GM12878 (cell line): ENCODE measurements at regions of chrX and their contacts with region 1.

Region 1: DNA sequence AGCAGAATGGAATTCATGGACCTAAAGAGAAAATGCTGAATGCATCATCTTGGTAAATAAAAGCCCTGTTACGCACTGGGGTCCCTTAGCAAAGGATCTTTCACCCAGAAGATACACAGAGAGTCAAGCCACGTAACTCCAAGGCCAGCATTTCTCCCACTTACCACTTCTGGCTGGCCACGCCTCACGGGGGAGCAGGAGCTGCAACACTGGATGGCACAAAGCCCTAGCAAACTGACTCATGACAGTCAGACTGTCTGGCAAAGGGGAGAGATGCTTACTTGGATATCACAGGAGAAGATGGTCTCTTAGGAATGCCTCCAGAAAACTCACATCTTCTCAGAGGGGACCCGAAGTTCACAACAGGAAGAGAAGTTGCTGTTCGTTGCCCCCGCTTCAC is 51.4 kb upstream of the BCLAF3 start:
- DNase-seq: no peak
- ATAC-seq: no peak
- H3K4me3 ChIP-seq: no peak overlapping the region
- H3K27ac ChIP-seq: no peak overlapping the region
- H3K4me1 ChIP-seq: no peaks in the 10 kb centered on the region
- H3K27me3 ChIP-seq: no peaks in the 10 kb centered on the region
- CTCF ChIP-seq: no peak
- EP300 ChIP-seq: no peak
- POLR2A ChIP-seq: no peak
- RAD21 ChIP-seq: no peak

Region 2: DNA sequence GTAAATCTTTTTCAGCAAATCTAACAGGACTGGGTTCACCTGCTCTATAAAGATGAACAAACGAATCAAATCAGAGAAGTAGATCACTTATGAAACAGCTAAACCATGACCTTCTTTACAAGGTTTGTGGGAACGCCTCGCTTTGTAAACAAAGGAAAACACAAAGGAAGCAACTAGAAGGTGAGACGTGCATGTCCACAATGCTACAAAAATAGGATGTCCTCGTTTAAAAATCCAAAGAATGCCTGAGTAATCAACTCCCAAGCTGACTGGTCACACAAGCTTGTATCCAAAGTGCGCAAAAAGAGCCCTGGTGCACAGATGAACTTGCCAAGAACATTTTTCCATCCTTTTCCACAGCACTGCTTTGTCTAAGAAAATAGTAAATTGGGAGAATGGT is 148.5 kb before region 1 on chrX:
- CTCF ChIA-PET with region 1: no interaction called
- POLR2A ChIA-PET with region 1: no interaction called
- RAD21 ChIA-PET with region 1: no interaction called
- SMC1A ChIA-PET with region 1: no interaction called
- in situ Hi-C with region 1: no loop called
- intact Hi-C with region 1: no loop called
- DNase-seq: no peak
- ATAC-seq: no peak
- H3K4me3 ChIP-seq: no peak overlapping the region
- H3K27ac ChIP-seq: no peak overlapping the region
- H3K4me1 ChIP-seq: peaks cover 9% of the 10 kb centered on the region; the same call in 1 of the 2 replicates
- H3K27me3 ChIP-seq: no peaks in the 10 kb centered on the region
- CTCF ChIP-seq: no peak
- EP300 ChIP-seq: no peak
- POLR2A ChIP-seq: no peak
- RAD21 ChIP-seq: no peak

Region 3: DNA sequence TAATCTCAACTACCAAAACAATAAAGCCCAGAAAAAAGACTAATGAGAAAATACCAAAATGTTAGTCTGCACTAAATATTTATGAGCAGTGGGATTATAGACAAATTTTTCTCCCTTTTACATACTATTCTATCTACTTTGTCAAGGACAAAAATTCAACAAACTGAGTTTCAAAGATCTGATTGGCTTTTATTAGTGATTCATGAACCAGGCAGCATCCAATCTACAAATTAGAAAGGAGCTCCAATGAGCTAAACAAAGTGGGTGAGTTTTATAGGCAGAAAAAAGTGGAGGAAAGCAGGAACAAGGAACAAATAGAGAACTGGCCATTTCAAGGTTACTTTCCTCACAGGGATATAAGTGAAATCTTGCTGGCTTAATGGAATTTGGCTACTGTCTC is 130.4 kb before region 1 on chrX:
- CTCF ChIA-PET with region 1: no interaction called
- POLR2A ChIA-PET with region 1: no interaction called
- RAD21 ChIA-PET with region 1: no interaction called
- SMC1A ChIA-PET with region 1: no interaction called
- in situ Hi-C with region 1: no loop called
- intact Hi-C with region 1: no loop called
- DNase-seq: no peak
- ATAC-seq: no peak
- H3K4me3 ChIP-seq: no peak overlapping the region
- H3K27ac ChIP-seq: no peak overlapping the region
- H3K4me1 ChIP-seq: no peaks in the 10 kb centered on the region
- H3K27me3 ChIP-seq: no peaks in the 10 kb centered on the region
- CTCF ChIP-seq: no peak
- EP300 ChIP-seq: no peak
- POLR2A ChIP-seq: no peak
- RAD21 ChIP-seq: no peak

Region 4: DNA sequence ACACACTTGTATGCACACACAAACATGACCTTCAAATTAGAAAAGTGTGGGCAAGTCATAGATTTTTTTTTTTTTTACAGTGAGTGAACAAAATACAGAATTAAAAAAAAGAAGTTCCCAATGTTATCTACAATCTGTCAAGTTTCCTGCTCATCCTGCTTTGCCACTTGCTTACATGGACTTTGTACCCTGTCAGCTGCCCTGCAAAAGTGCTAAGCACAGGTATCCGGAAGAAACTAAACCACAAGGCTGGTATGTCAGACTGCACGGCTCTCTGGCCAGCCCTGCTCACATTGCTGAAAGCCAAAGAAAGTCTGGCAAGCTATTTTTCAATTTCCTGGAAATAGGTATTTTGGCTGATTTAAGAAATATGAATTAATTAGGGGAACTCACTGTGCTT is 12.5 kb before region 1 on chrX:
- CTCF ChIA-PET with region 1: interaction called, 3 read pairs
- POLR2A ChIA-PET with region 1: no interaction called
- RAD21 ChIA-PET with region 1: no interaction called
- SMC1A ChIA-PET with region 1: no interaction called
- in situ Hi-C with region 1: no loop called
- intact Hi-C with region 1: loop called (anchors 1 kb)
- DNase-seq: peak; percentile 2
- ATAC-seq: peak; percentile 90
- H3K4me3 ChIP-seq: no peak overlapping the region
- H3K27ac ChIP-seq: no peak overlapping the region
- H3K4me1 ChIP-seq: no peaks in the 10 kb centered on the region
- H3K27me3 ChIP-seq: no peaks in the 10 kb centered on the region; a peak in 1 of 4 replicates
- CTCF ChIP-seq: no peak
- EP300 ChIP-seq: no peak
- POLR2A ChIP-seq: no peak
- RAD21 ChIP-seq: no peak